HAP-1 (cell line): ENCODE measurements at regions of chr20 and their contacts with region 1.

Region 1: DNA sequence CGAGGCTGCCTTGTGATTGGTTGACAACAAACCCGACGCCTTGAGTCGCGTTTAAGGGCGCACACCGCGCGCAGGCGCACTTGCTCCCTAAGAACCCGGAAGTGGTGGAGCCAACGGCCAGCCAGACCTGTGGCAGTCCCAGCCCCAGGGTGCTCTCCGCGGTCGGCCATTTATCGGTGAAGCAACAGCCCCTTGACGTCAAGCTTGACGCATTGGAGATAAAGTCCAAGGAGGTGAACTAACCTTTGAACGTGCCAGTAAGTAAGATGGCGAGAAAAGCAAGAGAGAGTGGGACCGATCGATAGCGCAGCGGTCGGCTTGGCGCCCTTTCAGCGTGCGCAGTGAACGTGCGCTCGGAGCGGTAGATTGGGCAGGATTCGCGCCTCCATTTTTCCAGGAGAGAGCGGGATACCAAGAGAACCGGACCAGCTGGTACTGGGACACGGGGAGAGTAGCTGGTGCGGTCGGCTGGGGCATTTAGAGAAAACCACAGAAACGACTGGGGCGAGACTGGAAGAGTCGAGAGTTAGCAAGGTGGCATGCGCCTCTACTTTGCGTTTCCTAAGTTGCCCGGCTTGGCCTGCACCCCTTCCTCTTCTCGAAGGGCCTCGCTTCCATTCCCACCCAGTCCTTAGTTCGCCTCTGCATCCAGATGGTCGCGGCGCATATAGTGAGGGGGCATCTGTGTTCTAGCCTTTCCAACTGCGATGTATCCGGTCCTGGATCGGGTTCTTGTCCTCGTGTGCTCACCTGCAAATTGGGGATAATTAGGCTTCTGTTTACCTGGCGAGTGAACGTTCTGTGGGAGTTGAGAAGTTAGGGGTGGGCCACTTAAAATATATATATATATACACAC is at the start of gene CSTF1:
- DNase-seq: peak; percentile 97 to 99
- H3K4me3 ChIP-seq: peak within 1 kb of the TSS; percentile 84
- H3K4me1 ChIP-seq: peaks cover 7% of the 10 kb centered on the region; the same call in 1 of the 2 replicates
- H3K27me3 ChIP-seq: no peaks in the 10 kb centered on the region

Region 2: DNA sequence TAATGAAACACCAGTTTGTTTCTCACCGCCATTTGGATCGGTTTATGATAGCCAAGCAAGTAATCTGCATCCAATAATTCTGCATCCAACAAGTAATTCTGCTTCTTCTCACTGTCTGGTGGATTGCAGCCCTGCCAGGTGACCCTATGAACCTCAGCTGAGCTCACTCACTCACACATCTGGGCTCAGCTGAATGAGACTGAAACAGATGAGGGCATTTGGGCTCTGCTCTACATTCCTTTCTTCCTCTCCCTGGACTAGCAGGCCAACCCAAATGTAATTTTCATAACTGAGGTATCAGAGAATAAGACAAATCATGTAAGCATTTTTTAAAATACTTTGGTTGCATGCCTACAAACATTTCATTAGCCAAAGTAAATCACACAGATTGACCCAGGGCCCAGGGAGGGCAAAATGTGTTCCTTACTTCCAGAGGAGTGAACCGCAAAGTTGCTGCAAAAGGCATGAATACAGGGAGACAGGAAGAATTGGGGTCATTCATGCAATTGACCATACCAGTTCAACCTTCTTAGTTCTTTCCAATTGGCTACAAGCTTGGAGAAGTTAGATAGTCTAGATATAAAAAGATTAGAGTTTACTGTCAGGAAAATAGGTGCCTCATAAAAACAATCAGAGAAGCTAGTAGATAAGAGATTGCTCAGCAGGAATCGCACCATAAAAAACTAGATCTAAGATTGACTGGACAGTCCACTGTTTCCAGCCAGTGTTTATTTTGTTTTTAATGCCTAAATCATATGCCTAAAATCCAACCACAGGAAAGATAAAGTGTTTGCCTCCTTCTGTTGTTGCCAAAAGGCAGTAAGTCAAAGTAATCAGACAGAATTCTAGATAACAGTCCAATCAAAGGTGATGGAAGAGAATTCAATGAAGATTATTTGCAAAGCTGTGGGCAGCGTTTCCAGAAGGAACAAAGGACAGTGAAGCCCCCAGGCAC is 430.9 kb before region 1 on chr20:
- in situ Hi-C with region 1: no loop called
- DNase-seq: no peak
- H3K4me3 ChIP-seq: no peak overlapping the region
- H3K4me1 ChIP-seq: no peaks in the 10 kb centered on the region
- H3K27me3 ChIP-seq: no peaks in the 10 kb centered on the region

Region 3: GRCh38 chr20:56582542-56582941 is 190.0 kb after region 1 on chr20:
- in situ Hi-C with region 1: loop called (anchors 10 kb)
- DNase-seq: no peak
- H3K4me3 ChIP-seq: no peak overlapping the region
- H3K4me1 ChIP-seq: peaks cover 8% of the 10 kb centered on the region
- H3K27me3 ChIP-seq: no peaks in the 10 kb centered on the region